Posterior vena cava (tissue), 2 donors: ENCODE measurements at regions of chr19 and their contacts with region 1.

Region 1: DNA sequence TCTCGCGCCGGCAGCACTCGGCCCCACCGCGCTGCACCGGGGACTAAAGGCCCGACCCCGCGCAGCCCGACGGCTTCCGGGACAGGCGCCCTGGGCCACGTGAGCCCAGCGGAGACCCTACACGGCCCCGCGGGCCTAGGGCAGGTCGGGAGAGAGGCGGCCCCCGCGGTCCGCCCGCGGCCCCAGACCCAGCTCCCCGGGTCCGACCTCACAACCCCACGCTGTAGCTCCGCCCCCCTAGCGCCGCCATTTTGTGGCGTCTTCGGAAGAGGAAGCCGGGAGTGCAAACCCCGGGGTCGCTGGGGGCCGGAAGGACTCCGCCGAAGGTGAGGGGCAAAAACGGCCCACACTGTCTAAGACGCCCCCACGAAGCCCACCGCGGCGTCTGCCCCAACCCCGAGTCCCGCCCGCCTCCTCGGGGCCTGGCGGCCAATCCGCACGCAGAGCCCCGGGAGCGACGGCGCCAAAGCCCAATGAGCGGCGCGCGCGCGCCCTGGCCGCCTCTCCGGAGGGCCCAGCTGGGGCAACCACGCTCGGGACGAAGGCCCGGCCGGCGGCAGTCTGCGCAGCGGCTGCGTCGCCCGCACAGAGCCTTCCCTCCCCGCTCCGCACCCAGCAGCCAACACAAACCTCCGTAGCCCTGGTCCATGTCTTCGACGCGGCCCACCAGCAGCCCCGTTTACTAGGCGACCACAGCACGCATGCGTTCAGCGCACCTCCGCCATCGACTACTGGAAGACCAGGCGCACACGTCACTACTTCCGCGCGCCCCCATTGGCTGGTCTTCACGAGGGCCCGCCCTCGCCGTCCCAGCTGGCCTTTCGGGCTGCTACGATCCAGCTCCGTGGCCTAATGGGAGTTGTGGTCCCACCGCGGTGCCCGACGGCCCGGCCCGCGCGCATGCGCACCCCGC is at the start of gene AKAP8:
- DNase-seq: peak; percentile 99
- total RNA-seq, gene AKAP8: 24.2 to 33.6 TPM

Region 2: GRCh38 chr19:14715841-14716240 is 663.5 kb before region 1 on chr19:
- intact Hi-C with region 1: no loop called
- DNase-seq: no peak

Region 3: GRCh38 chr19:15177269-15178116 is 201.8 kb before region 1 on chr19:
- intact Hi-C with region 1: loop called in 1 of 2 experiments (anchors 10 kb)
- DNase-seq: peak; percentile 94

Region 4: GRCh38 chr19:15264061-15264932 is 115.0 kb before region 1 on chr19:
- intact Hi-C with region 1: loop called in 1 of 2 experiments (anchors 10 kb)
- DNase-seq: peak; percentile 93

Region 5: DNA sequence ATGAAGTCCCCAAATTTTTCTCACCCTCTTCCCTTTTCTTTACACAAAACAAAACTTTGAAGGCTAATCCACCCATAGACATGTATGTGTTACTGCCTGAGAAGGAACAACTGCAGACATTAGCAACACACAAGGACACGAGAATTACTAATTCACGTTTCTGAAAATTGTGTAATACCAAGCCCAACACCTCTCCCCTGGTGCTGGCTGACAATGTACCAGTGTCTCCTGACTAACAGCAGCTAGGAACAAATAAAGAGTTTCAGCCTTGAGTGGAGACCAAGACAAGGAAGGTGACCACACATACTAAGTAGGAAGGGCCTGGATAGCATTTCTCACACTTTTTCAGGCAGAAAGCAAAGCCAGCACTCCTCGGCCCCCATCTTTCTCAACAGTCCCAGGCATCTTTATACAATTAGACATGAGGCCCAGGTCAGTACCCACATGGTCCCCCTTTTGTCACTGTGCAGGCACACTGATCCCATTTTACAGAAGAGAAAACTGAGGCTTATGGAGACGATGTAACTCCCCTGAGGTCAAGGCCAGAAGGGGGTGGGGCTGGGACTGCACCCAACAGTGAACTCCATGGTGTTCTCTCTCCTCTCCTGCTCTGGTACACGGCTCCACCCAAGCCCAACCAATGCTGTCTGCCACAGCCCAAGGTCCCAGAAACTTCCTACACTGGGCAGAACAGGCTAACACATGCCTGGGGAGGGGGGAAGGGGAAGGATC is 55.7 kb before region 1 on chr19:
- intact Hi-C with region 1: loop called in 1 of 2 experiments (anchors 10 kb)
- DNase-seq: peak; percentile 85

Region 6: DNA sequence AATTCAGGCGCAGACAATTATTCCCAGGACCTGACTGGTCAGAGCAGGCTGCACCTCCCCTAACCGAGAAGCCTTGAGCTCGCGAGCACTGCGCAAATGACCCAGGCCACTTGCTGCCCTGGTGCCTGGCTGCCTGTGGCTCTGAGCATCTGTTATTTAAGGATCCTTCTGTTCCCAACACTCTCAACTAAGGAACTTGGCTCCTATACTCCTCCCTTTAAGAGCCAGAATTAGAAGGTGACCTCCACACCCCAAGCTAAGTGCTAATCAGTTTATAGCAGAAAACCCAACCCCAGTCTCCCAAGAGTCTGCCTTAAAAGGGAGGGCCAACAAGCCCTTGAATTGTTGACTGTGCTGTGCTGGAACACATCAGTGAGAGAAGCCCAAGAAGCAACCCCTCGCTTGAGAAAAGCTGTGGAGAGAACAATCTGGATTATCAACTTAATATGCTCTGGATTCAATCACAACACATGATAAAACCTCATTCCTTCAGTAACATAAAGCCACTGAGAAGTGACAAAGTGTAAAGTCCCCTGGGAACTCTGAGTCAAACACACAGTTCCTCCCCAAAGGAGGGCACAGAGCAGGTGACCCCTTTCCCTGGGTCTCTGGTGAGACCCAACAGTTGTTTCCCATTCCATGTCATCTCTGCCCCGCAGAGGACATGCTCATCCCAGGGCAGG is 24.9 kb after region 1 on chr19:
- intact Hi-C with region 1: loop called in 1 of 2 experiments (anchors 5 kb)
- DNase-seq: peak; percentile 75

Region 7: DNA sequence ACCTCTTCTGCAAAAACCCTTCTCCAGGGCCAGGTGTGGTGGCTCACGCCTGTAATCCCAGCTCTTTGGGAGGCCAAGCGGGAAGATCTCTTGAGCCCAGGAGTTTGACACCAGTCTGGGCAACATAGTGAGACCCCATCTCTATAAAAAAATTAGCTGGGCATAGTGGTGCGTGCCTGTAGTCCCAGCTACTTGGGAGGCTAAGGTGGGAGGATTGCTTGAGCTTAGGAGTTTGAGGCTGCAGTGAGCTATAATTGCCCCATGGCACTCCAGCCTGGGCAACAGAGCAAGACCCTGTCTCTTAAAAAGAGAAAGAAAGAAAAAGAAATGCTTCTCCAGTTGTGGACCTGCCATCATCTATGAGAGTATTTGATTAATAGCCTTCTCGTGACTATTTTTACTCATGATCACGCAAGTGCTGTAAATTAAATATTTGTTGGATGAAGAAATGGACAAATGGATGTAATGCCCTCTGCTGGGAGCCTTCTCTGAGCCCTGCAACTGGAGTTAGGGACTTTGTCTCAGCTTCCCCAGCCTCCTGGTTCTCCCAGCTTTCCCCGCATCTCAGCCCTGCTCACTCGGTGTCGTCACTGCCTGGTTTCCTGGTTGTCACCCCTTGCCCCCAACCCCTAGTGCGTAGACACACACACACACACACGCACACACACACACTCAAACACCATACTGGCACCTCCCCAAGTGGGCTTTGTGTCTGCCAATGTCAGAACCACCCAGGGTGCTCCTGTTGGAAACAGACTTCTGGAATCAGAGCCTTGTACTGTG is 58.2 kb after region 1 on chr19:
- intact Hi-C with region 1: loop called in 1 of 2 experiments (anchors 5 kb)
- DNase-seq: no peak

Region 8: DNA sequence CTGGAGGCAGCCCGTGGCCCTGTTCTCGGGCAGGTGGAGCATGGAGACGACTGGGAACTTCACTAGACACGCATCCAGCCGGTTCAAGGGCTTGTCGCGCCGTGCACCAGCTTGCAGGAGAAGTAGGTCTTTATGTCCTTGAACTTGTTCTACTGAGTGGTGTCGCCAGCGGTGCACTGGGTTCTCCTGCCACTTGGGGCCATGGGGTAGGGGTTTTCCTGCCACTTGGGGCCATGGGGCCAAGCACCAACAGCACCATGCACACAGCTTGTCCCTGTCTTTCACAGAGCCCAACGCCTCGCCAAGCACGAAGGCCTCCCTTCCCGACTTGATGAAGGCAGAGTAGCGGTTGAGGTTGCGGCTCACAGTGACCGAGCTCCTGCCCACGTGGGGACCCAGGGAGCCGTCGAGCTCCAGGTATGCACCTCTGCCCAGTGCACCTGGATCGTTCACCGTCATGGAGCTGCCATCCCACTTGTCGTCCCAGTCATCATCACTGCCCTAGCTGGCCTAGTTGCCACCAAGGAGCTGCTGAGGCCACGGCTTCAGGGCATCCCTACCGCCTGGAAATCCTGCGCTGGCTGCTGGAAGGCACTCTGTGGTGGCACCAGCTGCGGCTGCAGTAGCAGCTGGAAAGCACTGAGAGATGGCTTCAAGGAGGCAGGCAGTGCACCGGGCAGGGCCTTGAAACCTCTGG is 656.4 kb after region 1 on chr19:
- intact Hi-C with region 1: loop called in 1 of 2 experiments (anchors 5 kb)
- DNase-seq: peak; percentile 68